Psoas muscle (tissue), 8 donors: ENCODE measurements at regions of chr16 and their contacts with region 1.

Region 1: GRCh38 chr16:19753815-19754643 is 36.0 kb downstream of the IQCK start:
- DNase-seq: no peak
- ATAC-seq: no peak
- H3K4me3 ChIP-seq: no peak overlapping the region
- H3K27ac ChIP-seq: peak overlapping the region; percentile 53
- H3K4me1 ChIP-seq: peaks cover 13% of the 10 kb centered on the region
- H3K27me3 ChIP-seq: no peaks in the 10 kb centered on the region
- CTCF ChIP-seq: no peak

Region 2: DNA sequence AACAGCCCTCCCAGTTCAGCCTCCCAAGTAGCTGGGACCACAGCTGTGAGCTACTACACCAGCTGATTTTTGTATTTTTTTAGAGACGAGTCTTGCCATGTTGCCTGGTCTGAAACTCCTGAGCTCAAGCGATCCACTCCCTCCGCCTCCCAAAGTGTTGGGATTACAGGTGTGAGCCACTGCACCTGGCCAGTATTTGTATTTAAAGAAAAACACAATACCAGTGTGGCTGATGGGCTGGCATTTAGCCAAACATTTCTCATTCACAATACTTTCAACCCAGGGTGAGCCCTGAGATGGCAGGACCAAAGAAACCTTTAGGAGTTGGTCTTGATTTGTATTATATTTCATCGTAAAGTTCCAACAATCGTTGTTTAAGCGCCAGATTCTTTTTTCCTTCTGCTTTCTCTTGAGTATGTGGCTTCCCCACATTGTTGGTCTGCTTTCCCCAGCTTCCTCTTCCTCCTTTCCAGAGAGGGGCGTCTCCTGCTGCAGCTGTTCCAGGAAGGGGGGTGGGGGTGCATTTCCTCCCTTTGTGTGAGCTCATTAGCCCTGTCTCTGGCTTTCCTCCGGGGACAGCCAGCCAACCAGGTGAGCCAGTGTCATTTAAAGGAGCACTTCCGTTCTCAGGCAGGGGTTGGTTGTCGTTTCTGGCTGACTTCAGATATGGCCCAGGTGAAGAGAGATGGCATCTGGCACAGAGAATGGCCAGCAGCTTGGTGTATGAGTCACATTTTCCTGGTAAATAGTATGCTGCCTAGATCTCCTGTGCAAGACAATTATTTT is 50.7 kb after region 1 on chr16:
- intact Hi-C with region 1: loop called in 1 of 2 experiments (anchors 10 kb)
- DNase-seq: peak; percentile 50 to 66
- ATAC-seq: peak in 1 of 4 donors; percentile 25
- H3K4me3 ChIP-seq: no peak overlapping the region
- H3K27ac ChIP-seq: peak overlapping the region; percentile 53
- H3K4me1 ChIP-seq: peaks cover 28% of the 10 kb centered on the region
- H3K27me3 ChIP-seq: no peaks in the 10 kb centered on the region
- CTCF ChIP-seq: no peak

Region 3: DNA sequence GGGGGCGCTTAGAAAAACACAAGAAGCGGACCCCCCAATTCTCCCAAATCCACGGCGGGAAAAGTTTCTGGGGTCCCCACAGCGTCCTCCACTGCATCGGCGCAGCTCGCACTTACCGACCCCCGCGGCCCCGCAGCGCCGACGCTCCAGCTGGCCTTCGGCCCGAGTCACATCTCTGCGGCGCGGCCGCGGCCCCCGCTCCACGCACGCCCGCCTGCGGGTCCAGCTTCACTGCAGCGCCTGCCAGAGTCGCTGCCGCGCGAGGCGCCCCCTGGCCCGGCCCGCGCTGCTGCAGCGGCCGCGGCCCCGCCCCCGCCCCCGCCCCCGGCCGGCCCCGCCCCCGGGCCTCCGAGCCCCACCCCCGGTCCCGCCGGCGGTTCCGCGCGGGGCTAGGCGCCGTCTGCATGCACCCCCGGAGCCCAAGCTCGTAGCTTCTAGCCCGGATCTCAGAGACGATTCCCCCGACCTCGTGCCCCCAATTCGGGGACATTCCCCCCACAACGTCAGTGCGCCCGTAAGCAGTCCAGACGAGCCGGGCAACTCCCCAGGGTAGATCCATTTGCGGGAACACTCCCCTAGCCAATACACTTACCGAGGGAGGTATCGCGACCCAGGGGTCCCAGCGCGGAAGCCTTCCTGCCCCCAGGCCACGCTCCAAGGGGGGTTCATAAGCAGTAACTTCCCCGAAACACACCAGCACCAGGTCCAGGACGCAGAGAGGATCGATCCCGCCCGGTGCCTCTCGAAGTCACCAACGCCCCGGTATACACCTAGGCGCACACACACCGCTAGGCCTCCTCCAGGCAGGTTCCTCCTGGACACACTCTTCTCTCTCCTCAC is 130.8 kb after region 1 on chr16 and contains the start of gene GPRC5B:
- intact Hi-C with region 1: no loop called
- DNase-seq: peak; percentile 55 to 82
- ATAC-seq: peak; percentile 59 to 71 (median 69)
- H3K4me3 ChIP-seq: peak within 1 kb of the TSS; percentile 92
- H3K27ac ChIP-seq: peak within 1 kb of the TSS; percentile 92
- H3K4me1 ChIP-seq: peaks cover 17% of the 10 kb centered on the region
- H3K27me3 ChIP-seq: no peaks in the 10 kb centered on the region
- CTCF ChIP-seq: peak; percentile 17
- total RNA-seq, gene GPRC5B: 38.5 to 124 (median 109) TPM